Activated CD8-positive, alpha-beta T cell treated with anti-CD3 and anti-CD28 coated beads for 36 hours (primary cell): ENCODE measurements at regions of chr14 and their contacts with region 1.

Region 1: GRCh38 chr14:69673578-69674305 is 62.3 kb downstream of the SUSD6 start:
- DNase-seq: peak; percentile 36
- ATAC-seq: no peak
- H3K4me3 Mint-ChIP-seq: peak overlapping the region; percentile 17
- H3K27ac Mint-ChIP-seq: peak overlapping the region; percentile 95
- H3K4me1 Mint-ChIP-seq: peaks cover 84% of the 10 kb centered on the region
- H3K27me3 Mint-ChIP-seq: no peaks in the 10 kb centered on the region
- CTCF ChIP-seq: no peak

Region 2: GRCh38 chr14:69611201-69612011 is 62.3 kb before region 1 on chr14 and contains the start of gene SUSD6:
- CTCF ChIA-PET with region 1: interaction called, 12 read pairs
- POLR2A ChIA-PET with region 1: interaction called, 21 read pairs
- intact Hi-C with region 1: loop called (anchors 2 kb)
- DNase-seq: peak; percentile 90
- ATAC-seq: peak; percentile 82
- H3K4me3 Mint-ChIP-seq: peak within 1 kb of the TSS; percentile 96
- H3K27ac Mint-ChIP-seq: peak within 1 kb of the TSS; percentile 92
- H3K4me1 Mint-ChIP-seq: peaks cover 48% of the 10 kb centered on the region
- H3K27me3 Mint-ChIP-seq: no peaks in the 10 kb centered on the region
- CTCF ChIP-seq: no peak
- total RNA-seq, gene SUSD6: 35.7 to 36.2 TPM

Region 3: DNA sequence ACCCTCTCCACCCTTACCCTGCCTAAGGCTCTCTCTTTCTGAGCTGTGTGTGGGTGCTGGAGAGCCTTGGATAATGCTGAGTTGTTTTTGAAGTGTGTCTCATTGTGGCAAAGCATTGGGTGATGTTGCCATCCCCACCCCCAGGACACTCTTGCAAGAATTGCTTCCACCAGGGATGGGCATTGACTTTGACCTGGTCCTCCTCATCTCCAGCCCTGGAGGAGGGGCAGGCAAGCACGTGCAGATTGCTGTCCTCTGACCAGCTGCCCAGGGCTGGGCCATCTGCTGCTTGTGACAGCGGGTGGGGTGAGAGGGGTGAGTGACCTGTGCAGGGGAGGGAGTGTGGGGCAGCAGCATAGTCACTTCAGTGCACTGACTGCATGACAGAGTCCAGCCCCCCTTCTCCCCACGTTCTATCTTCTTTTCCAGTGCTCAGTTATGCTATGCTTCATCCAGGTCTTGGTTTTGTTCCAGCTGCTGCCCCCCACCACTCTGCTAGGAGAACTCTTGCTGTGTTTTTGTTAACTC is 36.2 kb before region 1 on chr14:
- CTCF ChIA-PET with region 1: interaction called, 5 read pairs
- POLR2A ChIA-PET with region 1: interaction called, 23 read pairs
- intact Hi-C with region 1: loop called (anchors 2 kb)
- DNase-seq: no peak
- ATAC-seq: peak; percentile 11
- H3K4me3 Mint-ChIP-seq: peak overlapping the region; percentile 22
- H3K27ac Mint-ChIP-seq: peak overlapping the region; percentile 94
- H3K4me1 Mint-ChIP-seq: peaks cover 87% of the 10 kb centered on the region
- H3K27me3 Mint-ChIP-seq: no peaks in the 10 kb centered on the region
- CTCF ChIP-seq: no peak

Region 4: GRCh38 chr14:69643443-69644164 is 30.1 kb before region 1 on chr14:
- CTCF ChIA-PET with region 1: interaction called, 3 read pairs
- POLR2A ChIA-PET with region 1: interaction called, 23 read pairs
- intact Hi-C with region 1: loop called (anchors 2 kb)
- DNase-seq: peak; percentile 89
- ATAC-seq: peak; percentile 95
- H3K4me3 Mint-ChIP-seq: no peak overlapping the region
- H3K27ac Mint-ChIP-seq: peak overlapping the region; percentile 91
- H3K4me1 Mint-ChIP-seq: peaks cover 69% of the 10 kb centered on the region
- H3K27me3 Mint-ChIP-seq: no peaks in the 10 kb centered on the region
- CTCF ChIP-seq: no peak

Region 5: GRCh38 chr14:69685716-69686115 is 12.0 kb after region 1 on chr14:
- CTCF ChIA-PET with region 1: interaction called, 8 read pairs
- POLR2A ChIA-PET with region 1: interaction called, 29 read pairs
- intact Hi-C with region 1: no loop called
- DNase-seq: peak; percentile 54
- ATAC-seq: peak; percentile 48
- H3K4me3 Mint-ChIP-seq: peak overlapping the region; percentile 28
- H3K27ac Mint-ChIP-seq: peak overlapping the region; percentile 97
- H3K4me1 Mint-ChIP-seq: peaks cover 72% of the 10 kb centered on the region
- H3K27me3 Mint-ChIP-seq: no peaks in the 10 kb centered on the region
- CTCF ChIP-seq: no peak

Region 6: GRCh38 chr14:69715725-69716477 is 42.2 kb after region 1 on chr14:
- CTCF ChIA-PET with region 1: interaction called, 3 read pairs
- POLR2A ChIA-PET with region 1: interaction called, 3 read pairs
- intact Hi-C with region 1: loop called (anchors 5 kb)
- DNase-seq: no peak
- ATAC-seq: peak; percentile 25
- H3K4me3 Mint-ChIP-seq: no peak overlapping the region
- H3K27ac Mint-ChIP-seq: peak overlapping the region; percentile 73
- H3K4me1 Mint-ChIP-seq: peaks cover 32% of the 10 kb centered on the region
- H3K27me3 Mint-ChIP-seq: no peaks in the 10 kb centered on the region
- CTCF ChIP-seq: no peak